Motor neuron (in vitro differentiated cells): ENCODE measurements at regions of chr7 and their contacts with region 1.

Region 1: GRCh38 chr7:37201003-37201875 is 247.4 kb downstream of the ELMO1 start:
- ATAC-seq: peak; percentile 71 to 90 (median 82)
- H3K4me3 ChIP-seq: no peak overlapping the region
- H3K27ac ChIP-seq: no peak overlapping the region
- H3K4me1 ChIP-seq: peaks cover 0 to 3% of the 10 kb centered on the region in 2 donors

Region 2: GRCh38 chr7:36487756-36488336 is 713.4 kb before region 1 on chr7:
- in situ Hi-C with region 1: loop called in 7 of 9 experiments (anchors 10 to 25 kb)
- ATAC-seq: peak in 6 of 8 experiments; percentile 29 to 51 (median 44)
- H3K4me3 ChIP-seq: no peak overlapping the region
- H3K27ac ChIP-seq: no peak overlapping the region
- H3K4me1 ChIP-seq: no peaks in the 10 kb centered on the region

Region 3: DNA sequence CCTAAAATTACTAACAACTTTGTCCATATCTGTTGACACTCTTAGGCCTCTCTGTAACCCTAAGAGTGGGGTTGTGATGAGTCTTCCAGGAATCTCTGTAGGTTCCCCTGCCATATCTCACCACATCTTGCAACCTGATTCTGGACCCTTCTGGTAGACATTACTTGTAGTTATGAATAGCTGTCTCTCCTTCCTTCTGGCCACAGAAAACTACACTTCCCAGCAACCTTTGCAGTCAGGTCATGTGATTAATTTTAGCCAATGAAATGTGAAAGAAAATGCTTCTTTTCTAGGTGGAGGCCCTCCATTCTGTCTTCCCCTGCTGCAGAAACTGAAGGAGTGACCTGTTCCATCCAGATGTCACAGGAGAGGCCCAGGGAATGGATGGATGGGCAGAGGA is 329.4 kb before region 1 on chr7:
- in situ Hi-C with region 1: loop called in 1 of 9 experiments (anchors 25 kb)
- ATAC-seq: no peak
- H3K4me3 ChIP-seq: no peak overlapping the region
- H3K27ac ChIP-seq: no peak overlapping the region
- H3K4me1 ChIP-seq: no peaks in the 10 kb centered on the region

Region 4: GRCh38 chr7:36986429-36987362 is 214.5 kb before region 1 on chr7:
- in situ Hi-C with region 1: loop called in 6 of 9 experiments (anchors 25 kb)
- ATAC-seq: peak; percentile 44 to 74 (median 58)
- H3K4me3 ChIP-seq: peak overlapping the region in 4 of 5 donors; percentile 33 to 44 (median 39)
- H3K27ac ChIP-seq: peak overlapping the region; percentile 45 to 72
- H3K4me1 ChIP-seq: peaks cover 40 to 49% of the 10 kb centered on the region in 2 donors

Region 5: GRCh38 chr7:38262545-38262944 is 1061.3 kb after region 1 on chr7:
- in situ Hi-C with region 1: no loop called
- ATAC-seq: peak in 3 of 8 experiments; percentile 39 to 46 (median 44)
- H3K4me3 ChIP-seq: no peak overlapping the region
- H3K27ac ChIP-seq: no peak overlapping the region
- H3K4me1 ChIP-seq: peaks cover 0 to 4% of the 10 kb centered on the region in 2 donors